Activated B cell treated with CpG ODN at 0.5 μM for 24 hours (primary cell): ENCODE measurements at regions of chr1 and their contacts with region 1.

Region 1: GRCh38 chr1:178407655-178408054 is 89.1 kb downstream of the CLEC20A start:
- DNase-seq: no peak
- ATAC-seq: no peak
- H3K4me3 Mint-ChIP-seq: no peak overlapping the region
- H3K27ac Mint-ChIP-seq: no peak overlapping the region
- H3K4me1 Mint-ChIP-seq: peaks cover 24% of the 10 kb centered on the region
- H3K27me3 Mint-ChIP-seq: peaks cover 17% of the 10 kb centered on the region
- CTCF ChIP-seq: no peak

Region 2: GRCh38 chr1:177937931-177938330 is 469.7 kb before region 1 on chr1:
- CTCF ChIA-PET with region 1: no interaction called
- POLR2A ChIA-PET with region 1: no interaction called
- intact Hi-C with region 1: no loop called
- DNase-seq: no peak
- ATAC-seq: no peak
- H3K4me3 Mint-ChIP-seq: no peak overlapping the region
- H3K27ac Mint-ChIP-seq: no peak overlapping the region
- H3K4me1 Mint-ChIP-seq: no peaks in the 10 kb centered on the region
- H3K27me3 Mint-ChIP-seq: no peaks in the 10 kb centered on the region
- CTCF ChIP-seq: no peak

Region 3: DNA sequence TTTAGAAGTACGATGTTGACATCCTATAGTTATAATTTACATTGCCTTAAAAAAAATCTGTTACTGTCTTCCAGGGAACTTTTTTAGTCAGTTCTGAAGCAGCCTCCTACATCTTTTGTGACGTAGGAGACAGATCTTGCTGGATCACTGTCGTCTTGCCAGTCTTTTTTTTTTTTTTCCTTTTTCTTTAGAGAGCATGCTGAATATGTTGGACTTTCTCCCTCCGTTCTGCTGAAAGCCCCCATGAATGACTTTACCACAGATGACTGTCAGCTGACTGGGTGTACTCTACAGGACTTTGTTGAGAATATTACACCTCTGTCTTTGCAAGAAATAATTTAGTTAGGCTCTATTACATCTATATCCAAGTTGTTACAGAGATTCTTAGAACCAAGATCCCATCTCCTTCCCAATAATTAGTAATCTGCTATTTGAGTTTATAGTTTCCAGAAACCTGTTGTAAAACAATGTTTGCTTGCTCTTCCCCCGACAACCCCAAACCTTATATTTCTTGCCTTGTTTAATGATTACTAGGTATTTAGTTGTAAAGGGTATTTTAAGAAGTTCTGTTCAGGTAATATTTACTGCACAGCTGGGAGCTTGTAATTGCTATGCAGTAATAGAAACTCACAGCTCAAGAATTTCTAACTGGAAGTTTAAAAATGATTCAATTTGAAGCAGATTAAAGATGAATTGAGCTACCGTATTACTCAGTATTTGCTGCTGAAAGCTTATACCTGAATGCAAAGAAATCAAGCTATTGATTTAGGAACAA is 252.0 kb before region 1 on chr1:
- CTCF ChIA-PET with region 1: no interaction called
- POLR2A ChIA-PET with region 1: no interaction called
- intact Hi-C with region 1: no loop called
- DNase-seq: no peak
- ATAC-seq: no peak
- H3K4me3 Mint-ChIP-seq: no peak overlapping the region
- H3K27ac Mint-ChIP-seq: no peak overlapping the region
- H3K4me1 Mint-ChIP-seq: no peaks in the 10 kb centered on the region
- H3K27me3 Mint-ChIP-seq: peaks cover 7% of the 10 kb centered on the region
- CTCF ChIP-seq: no peak

Region 4: GRCh38 chr1:178354816-178355215 is 52.8 kb before region 1 on chr1:
- CTCF ChIA-PET with region 1: no interaction called
- POLR2A ChIA-PET with region 1: no interaction called
- intact Hi-C with region 1: loop called (anchors 10 kb)
- DNase-seq: no peak
- ATAC-seq: no peak
- H3K4me3 Mint-ChIP-seq: no peak overlapping the region
- H3K27ac Mint-ChIP-seq: no peak overlapping the region
- H3K4me1 Mint-ChIP-seq: no peaks in the 10 kb centered on the region
- H3K27me3 Mint-ChIP-seq: peaks cover 2% of the 10 kb centered on the region
- CTCF ChIP-seq: no peak